ENCODE measurements at regions of chr19 and their contacts with region 1.

Region 1: DNA sequence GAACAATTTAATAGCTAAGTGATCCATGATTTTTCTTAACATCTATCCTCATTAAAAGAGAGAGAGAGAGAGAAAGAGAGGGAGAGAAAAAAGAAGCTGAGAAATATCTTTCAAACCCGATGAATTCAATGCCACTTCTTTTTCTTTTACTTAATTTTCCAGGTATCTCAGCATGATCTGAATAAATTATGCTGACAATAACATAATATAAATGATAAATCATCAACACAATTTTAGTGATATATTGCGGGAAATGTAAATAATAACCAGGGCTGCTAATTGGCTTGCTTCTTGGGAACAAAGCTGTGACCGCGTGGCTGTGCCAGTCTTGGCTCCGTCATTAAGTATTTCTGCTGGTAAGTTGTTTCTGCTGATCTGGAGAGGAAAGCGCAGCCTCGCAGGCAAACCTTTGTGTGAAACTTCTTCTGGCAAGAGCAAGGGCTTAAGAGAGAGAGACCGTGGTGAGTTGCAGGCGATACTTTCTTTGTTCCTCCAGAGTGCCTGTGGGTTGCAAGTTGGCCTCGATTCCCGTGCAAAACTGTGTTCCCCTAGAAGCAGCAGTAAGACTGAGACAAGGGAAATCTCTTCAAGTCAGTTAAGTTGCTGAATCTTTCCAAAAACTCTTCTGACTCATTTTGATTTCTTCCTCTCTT is 489.1 kb upstream of the TSHZ3 start:
- DNase-seq: no peak

Region 2: DNA sequence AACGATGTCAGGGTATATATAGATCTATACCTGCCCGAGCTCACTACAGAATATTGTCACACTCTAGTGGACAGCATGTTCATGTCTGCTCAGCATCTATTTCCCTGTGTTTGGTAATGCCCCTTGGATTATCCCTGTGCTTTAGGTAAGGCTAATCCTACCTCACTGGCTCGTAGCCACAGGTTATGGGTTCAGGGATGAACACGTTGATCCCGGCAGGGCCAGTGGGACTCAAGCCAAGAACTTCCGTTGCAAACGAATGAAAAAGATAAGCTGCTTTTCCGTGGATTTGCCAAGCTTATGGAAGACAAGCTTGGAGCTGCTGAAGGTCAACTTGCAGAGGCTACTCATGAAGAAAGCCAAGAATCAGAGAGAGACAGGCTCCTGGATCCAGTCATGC is 89.1 kb before region 1 on chr19:
- intact Hi-C with region 1: no loop called
- DNase-seq: no peak

Region 3: GRCh38 chr19:31908496-31909225 is 70.4 kb after region 1 on chr19:
- intact Hi-C with region 1: loop called in 1 of 2 experiments (anchors 2 kb)
- DNase-seq: no peak

Measured in posterior vena cava (tissue), 2 donors.